ENCODE measurements at regions of chr4 and their contacts with region 1.

Region 1: DNA sequence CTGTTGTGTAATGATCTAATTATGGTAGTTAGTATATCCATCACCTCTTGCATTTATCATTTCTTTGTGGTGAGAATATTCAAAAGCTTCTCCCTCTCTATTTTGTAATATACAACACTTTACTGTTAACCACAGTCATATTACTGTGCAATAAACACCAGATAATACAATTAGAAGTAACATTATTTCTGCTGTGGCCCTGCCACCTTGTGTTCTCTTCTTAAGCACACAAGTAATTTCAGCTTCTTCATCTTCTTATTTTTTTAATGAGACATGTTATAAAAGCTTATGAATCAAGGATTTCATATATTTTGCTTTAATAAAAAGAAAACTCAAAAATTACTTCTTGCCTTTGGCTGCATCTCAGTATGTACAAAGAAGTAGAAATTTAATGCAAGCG is 675.2 kb upstream of the INTU start:
- DNase-seq: no peak
- H3K4me3 ChIP-seq: no peak overlapping the region
- CTCF ChIP-seq: no peak
- POLR2A ChIP-seq: no peak

Region 2: DNA sequence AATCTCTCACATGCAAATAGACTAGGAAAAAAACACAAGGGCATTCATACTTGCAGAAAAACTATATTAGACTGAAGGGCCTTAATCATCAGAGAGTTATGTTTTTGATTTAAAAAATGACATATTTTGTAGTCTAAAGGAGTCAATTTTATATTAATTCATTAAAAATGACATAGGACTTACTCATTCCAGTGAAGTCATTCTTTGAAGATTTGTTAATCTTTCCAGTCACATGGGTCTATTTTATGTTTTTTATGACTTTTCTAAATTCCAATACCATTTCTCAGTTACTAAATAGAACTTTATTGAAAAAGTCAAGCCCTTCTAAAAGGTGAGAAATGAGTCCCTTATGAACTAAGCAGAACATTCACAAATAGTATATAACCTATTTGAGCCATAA is 68.6 kb before region 1 on chr4:
- intact Hi-C with region 1: loop called (anchors 2 kb)
- DNase-seq: no peak
- H3K4me3 ChIP-seq: no peak overlapping the region
- CTCF ChIP-seq: no peak
- POLR2A ChIP-seq: no peak

Region 3: DNA sequence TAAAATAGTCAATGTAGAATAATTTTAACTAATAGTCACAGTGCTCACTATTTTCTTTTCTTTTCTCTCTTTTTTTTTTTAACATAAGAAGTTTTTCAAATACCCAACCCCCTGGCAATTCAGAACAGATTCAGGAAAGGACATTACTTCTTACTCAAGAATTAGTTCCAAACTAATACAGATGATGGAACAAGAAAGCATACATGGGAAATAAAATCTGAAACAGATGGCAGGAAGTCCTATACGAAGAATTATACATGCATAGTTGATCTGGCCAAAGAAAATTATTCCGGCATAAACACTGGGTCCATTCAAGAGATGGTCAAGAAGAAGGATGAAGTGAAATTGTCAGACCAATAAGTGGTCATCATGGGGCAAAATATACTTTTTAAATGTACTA is 60.8 kb after region 1 on chr4:
- intact Hi-C with region 1: no loop called
- DNase-seq: no peak
- H3K4me3 ChIP-seq: no peak overlapping the region
- CTCF ChIP-seq: no peak
- POLR2A ChIP-seq: no peak

Measured in lower leg skin (tissue), 4 donors.